ENCODE measurements at regions of chr11 and their contacts with region 1.

Region 1: DNA sequence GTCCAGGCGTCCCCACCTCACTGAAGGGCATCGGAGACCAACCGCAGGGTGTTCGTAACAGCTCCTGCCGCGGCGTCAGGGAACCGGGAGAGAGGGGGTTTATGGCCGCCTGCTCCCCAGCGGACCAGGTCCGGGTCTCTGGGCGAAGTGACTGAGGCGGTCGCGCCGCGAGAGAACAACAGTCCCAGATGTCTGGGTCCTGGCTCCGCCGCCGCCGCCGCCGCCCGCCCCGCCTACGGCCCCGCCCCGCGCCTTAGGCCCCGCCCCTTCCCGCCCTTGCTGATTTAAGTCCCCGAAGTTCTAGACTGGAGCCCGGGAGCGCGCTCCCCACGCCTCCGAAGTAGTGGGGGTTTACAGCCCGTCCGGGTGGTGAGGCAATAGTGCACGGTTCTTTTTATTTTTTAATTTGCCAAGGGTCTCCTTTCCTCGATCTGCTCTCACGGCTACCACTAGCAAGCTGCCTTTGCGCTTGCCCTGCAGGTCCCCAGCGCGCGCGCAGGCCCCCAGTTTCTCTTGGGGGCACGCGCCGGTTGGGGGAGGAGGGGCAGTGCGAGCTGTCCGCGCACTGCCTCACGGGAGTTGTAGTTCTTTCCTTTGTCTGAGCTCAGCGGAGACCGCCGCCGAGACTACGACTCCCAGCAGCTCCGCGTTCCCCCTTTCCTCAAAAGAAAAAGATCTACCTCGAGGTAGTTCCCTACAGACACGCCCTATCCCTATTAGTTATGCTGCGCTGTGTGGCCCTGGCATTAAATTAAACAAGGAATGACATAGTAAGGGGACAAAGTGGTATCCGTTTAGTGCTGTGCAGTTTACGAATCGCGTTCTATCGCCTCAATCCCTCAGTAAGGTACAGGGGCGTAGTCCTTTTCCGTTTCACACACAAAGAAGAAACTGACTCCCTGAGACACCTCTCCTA is at the start of gene PGM2L1:
- DNase-seq: peak; percentile 91 to 95
- H3K4me3 ChIP-seq: peak within 1 kb of the TSS; percentile 76
- H3K27ac ChIP-seq: peak within 1 kb of the TSS; percentile 37
- H3K4me1 ChIP-seq: peaks cover 14% of the 10 kb centered on the region
- H3K27me3 ChIP-seq: no peaks in the 10 kb centered on the region
- CTCF ChIP-seq: no peak
- total RNA-seq, gene PGM2L1: 7.3 and 7.8 TPM in 2 replicates

Region 2: GRCh38 chr11:74416985-74417804 is 18.7 kb after region 1 on chr11:
- CTCF ChIA-PET with region 1: no interaction called
- POLR2A ChIA-PET with region 1: interaction called, 5 read pairs
- intact Hi-C with region 1: loop called (anchors 2 kb)
- DNase-seq: peak; percentile 28 to 92
- H3K4me3 ChIP-seq: no peak overlapping the region
- H3K27ac ChIP-seq: peak overlapping the region; percentile 65
- H3K4me1 ChIP-seq: peaks cover 50% of the 10 kb centered on the region
- H3K27me3 ChIP-seq: no peaks in the 10 kb centered on the region
- CTCF ChIP-seq: no peak

Region 3: GRCh38 chr11:74592441-74593362 is 194.2 kb after region 1 on chr11 and contains the start of gene POLD3:
- CTCF ChIA-PET with region 1: no interaction called
- POLR2A ChIA-PET with region 1: no interaction called
- intact Hi-C with region 1: loop called (anchors 5 kb)
- DNase-seq: peak; percentile 84 to 93
- H3K4me3 ChIP-seq: peak within 1 kb of the TSS; percentile 98
- H3K27ac ChIP-seq: peak within 1 kb of the TSS; percentile 54
- H3K4me1 ChIP-seq: peaks cover 23% of the 10 kb centered on the region
- H3K27me3 ChIP-seq: no peaks in the 10 kb centered on the region
- CTCF ChIP-seq: no peak
- total RNA-seq, gene POLD3: 41.2 and 44.1 TPM in 2 replicates

Region 4: DNA sequence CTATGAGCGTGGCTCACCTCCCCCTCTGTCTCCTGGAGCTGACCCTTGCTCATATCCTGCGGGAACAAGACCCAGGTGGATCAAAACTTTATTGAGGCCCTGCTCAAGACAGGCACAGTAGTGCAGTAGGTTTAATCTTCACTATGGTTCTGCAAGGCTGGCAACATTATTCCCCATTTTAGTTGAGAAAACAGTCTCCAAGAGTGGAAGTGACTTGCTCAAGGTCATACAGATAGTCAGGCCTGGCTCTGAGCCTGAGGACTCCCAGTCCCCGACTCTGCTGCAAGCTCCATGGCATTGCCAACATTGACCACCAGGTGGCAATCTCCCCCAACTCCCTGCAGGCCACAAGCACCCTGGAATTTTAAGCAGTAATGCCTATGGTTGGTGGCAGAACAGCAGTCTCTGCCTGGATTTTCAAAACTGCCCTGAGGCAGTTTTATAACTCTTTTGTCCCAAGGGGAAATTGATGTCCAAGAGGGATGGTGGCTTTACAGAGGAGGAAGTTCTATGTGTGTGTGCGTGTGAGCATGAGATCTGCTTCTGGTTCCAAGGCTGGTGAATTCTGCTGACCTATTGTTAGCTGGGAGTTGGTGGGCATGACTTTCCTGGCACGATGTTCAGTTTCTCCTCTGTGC is 624.4 kb after region 1 on chr11:
- CTCF ChIA-PET with region 1: no interaction called
- POLR2A ChIA-PET with region 1: no interaction called
- intact Hi-C with region 1: no loop called
- DNase-seq: peak; percentile 69 to 87
- H3K4me3 ChIP-seq: no peak overlapping the region
- H3K27ac ChIP-seq: no peak overlapping the region
- H3K4me1 ChIP-seq: no peaks in the 10 kb centered on the region
- H3K27me3 ChIP-seq: peaks cover 33% of the 10 kb centered on the region; the same call in 1 of the 2 replicates
- CTCF ChIP-seq: peak; percentile 98